Calu3 (cell line): ENCODE measurements at regions of chr7 and their contacts with region 1.

Region 1: DNA sequence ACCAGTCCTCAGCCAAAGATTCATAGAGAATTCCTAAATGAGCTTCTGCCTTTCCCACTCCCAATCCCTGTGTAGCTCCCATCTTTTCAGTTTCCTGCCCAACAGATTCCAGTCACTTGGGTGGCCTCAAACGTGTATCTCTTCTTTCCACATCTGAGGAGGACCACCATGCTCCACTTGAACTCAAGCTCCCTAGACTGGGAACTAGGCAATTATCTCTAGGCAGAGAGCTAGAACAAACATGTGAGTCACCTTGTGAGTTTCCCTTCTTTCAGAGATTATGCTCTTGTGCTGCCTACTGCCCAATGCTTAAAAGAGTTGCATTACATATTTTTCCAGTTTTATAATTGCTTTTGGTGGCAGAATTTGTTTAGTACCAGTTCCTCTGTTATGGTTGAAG is 178.0 kb downstream of the MDFIC start:
- DNase-seq: peak; percentile 11
- H3K4me3 Mint-ChIP-seq: no peak overlapping the region
- H3K27ac Mint-ChIP-seq: peak overlapping the region; percentile 77
- H3K4me1 Mint-ChIP-seq: peaks cover 52% of the 10 kb centered on the region
- H3K27me3 Mint-ChIP-seq: no peaks in the 10 kb centered on the region
- CTCF ChIP-seq: no peak

Region 2: DNA sequence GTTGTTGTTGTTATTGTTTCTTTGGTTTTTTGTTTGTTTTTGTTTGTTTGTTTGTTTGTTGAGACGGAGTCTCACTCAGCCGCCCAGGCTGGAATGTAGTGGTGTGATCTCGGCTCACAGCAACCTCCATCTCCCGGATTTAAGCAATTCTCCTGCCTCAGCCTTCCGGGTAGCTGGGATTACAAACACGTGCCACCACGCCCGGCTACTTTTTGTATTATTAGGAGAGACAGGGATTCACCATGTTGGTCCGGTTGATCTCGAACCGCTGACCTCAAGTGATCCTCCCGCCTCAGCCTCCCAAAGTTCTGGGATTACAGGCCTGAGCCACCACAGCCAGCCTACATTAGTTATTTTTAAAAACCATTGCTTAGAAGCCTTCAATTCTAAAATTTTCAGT is 640.3 kb before region 1 on chr7:
- CTCF ChIA-PET with region 1: no interaction called
- intact Hi-C with region 1: no loop called
- DNase-seq: no peak
- H3K4me3 Mint-ChIP-seq: no peak overlapping the region
- H3K27ac Mint-ChIP-seq: no peak overlapping the region
- H3K4me1 Mint-ChIP-seq: peaks cover 9% of the 10 kb centered on the region
- H3K27me3 Mint-ChIP-seq: no peaks in the 10 kb centered on the region
- CTCF ChIP-seq: no peak

Region 3: DNA sequence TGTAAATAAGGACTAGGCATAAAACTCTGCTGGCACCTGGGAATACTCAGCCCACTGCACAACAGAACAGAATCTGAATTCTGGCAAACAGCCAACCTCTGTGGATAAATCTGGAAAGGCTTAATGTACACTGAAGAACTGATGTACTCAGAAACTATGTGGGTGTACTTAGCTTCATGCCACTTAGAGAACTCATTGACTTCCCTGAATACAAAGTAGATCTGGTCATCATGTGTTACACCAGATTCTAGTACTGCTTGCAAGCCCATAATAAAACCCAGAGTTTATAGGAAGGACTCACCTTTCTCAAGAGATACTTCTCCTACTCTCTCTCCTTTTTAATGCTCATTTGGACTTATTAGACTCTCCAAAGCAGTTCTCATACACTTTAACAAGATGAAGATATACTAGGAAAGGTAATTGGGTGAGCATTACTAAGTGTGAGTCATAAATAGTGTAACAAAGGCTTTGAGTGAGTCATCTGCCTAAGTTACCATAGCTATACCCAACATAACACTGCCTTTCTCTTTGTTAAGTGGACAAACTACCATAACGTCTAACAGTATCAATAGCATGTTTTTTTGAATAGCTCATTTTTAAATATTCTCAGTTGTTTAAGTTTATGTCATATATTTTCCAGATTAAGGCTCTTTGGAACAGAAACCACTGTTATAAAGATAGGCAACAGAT is 131.1 kb after region 1 on chr7:
- CTCF ChIA-PET with region 1: no interaction called
- intact Hi-C with region 1: loop called (anchors 5 kb)
- DNase-seq: peak; percentile 32
- H3K4me3 Mint-ChIP-seq: no peak overlapping the region
- H3K27ac Mint-ChIP-seq: peak overlapping the region; percentile 97
- H3K4me1 Mint-ChIP-seq: peaks cover 9% of the 10 kb centered on the region
- H3K27me3 Mint-ChIP-seq: no peaks in the 10 kb centered on the region
- CTCF ChIP-seq: no peak